Right ventricle myocardium inferior (tissue), 1 donor: ENCODE measurements at regions of chr7 and their contacts with region 1.

Region 1: DNA sequence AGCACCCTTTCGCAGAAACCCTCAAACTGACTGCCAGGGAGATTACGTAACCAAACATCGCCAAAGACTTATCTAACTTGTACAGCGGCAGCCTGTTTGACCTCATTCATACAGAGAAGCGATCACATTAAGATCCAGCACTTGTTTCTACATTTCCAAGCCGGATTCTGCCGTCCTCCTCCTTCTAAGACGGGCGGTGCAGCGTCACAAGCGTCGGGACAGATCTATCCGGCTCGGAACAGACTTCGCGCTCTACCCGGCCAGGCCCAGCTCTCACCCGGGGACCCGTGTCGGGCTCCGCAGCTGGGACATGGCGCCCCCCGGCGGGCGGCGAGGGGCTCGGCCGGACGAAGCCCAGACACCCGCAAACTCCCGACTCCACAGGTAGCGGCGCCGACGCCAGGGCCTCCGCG is 373 bp downstream of the H2AZ2 start:
- DNase-seq: peak; percentile 91
- ATAC-seq: peak; percentile 80

Region 2: DNA sequence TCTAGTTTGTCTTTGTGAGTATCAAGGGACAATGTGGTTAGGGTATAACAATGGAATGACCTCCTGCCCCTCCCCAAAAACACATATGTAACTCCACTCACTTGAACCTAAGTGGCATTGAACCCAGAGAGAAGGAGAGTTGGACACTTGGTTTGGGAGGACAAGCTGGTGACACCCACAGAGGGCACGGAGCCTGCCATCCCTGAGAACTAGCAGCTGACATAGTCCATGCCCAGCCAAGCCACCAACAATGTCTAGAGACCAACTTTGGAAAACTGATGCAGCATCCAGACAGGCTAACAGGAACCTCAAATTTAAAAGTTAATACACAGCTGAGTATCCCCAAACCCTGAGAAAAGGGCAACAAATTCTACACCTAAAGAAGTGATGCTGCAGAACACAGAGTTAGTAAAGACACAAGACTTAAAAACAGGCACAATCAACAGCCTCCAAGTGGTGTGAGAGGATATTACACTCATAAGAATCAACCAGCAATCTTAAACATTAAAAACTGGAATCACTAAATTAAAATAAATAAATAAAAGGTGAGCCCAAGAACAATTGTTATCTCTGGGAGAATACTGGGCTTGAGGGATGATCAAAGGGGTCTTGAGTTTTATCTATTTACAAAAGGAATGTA is 384.2 kb before region 1 on chr7:
- intact Hi-C with region 1: no loop called
- DNase-seq: no peak
- ATAC-seq: no peak

Region 3: GRCh38 chr7:44587843-44588711 is 259.4 kb before region 1 on chr7:
- intact Hi-C with region 1: loop called (anchors 2 kb)
- DNase-seq: no peak
- ATAC-seq: peak; percentile 51

Region 4: GRCh38 chr7:44693721-44694285 is 153.7 kb before region 1 on chr7:
- intact Hi-C with region 1: loop called (anchors 5 kb)
- DNase-seq: peak; percentile 73
- ATAC-seq: peak; percentile 90

Region 5: DNA sequence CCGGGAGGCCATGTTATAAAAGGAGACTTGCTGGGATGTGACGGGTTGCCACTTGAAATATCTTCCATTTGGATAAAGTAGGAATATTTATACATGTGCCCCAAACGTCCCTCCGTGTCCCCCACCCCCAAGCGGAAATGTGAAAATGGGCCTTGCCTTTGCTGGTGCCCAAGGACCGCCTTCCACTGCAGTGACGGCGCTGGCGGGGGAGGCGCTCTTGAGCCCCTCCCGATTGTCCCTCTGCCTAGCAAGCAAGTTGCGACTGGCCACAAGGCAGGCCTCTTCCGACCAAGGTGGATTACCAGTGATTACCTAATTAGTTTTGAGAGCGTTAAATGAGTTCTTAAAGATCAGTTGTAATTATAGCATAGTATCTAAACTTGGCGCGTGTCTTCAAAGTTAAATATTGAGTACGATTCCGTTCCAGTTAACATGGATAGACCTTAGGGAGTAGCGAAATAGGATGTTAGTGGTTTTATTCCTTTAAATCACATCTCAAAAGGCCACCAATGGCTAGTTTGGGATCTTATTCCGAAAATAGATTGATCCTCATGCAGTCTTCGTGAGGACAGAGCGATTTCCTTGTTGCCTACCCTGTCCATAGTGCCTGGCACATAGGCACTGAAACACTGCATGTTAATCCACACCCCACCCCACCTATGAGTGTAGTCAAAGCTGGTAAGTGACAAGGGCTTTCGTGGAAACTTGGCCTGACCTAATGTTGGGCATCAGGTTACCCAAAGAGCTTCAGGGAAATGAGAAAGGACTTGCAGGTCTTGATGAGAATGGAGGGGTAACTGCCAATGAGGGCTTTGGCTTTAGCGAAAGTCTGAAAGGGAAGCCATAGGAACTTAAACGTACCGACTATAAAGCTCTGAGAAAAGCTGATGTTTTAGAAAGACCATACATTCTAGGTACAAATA is 49.9 kb before region 1 on chr7:
- intact Hi-C with region 1: loop called (anchors 2 kb)
- DNase-seq: peak; percentile 94
- ATAC-seq: peak; percentile 78